PC-3 (cell line): ENCODE measurements at regions of chr5 and their contacts with region 1.

Region 1: DNA sequence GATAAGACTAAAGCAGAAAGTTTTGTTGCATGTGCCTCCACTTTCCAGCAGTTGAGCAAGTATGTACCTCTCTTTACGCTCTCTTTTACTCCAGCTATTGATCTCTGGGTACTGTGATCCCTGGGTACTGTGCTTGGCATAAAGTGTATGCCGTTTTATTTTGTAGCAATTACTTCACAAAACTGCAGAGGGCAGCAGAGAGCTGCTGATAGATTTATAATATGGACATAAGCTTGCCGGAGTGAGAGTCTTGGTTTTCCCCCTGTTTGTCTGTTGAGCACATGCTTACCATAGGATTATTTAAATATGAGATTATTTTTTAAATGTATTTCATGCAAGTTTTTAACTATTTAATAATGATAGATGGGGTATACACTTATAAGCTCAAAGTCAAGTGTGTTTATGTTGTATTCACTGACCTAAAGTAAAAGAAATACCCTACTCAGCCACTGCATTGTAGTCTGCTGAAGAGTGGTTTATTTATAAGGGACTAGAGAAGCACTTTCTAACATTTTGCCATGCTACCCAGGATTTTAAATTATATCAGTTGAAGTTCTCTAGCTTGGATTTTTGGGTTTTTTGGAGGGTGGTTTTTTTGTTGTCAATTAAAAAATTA is 13.0 kb downstream of the TTC1 start:
- DNase-seq: peak; percentile 81
- ATAC-seq: peak; percentile 81
- H3K4me3 ChIP-seq: no peak overlapping the region
- H3K27ac ChIP-seq: no peak overlapping the region
- H3K4me1 ChIP-seq: no peaks in the 10 kb centered on the region
- H3K27me3 ChIP-seq: no peaks in the 10 kb centered on the region
- CTCF ChIP-seq: peak; percentile 85

Region 2: DNA sequence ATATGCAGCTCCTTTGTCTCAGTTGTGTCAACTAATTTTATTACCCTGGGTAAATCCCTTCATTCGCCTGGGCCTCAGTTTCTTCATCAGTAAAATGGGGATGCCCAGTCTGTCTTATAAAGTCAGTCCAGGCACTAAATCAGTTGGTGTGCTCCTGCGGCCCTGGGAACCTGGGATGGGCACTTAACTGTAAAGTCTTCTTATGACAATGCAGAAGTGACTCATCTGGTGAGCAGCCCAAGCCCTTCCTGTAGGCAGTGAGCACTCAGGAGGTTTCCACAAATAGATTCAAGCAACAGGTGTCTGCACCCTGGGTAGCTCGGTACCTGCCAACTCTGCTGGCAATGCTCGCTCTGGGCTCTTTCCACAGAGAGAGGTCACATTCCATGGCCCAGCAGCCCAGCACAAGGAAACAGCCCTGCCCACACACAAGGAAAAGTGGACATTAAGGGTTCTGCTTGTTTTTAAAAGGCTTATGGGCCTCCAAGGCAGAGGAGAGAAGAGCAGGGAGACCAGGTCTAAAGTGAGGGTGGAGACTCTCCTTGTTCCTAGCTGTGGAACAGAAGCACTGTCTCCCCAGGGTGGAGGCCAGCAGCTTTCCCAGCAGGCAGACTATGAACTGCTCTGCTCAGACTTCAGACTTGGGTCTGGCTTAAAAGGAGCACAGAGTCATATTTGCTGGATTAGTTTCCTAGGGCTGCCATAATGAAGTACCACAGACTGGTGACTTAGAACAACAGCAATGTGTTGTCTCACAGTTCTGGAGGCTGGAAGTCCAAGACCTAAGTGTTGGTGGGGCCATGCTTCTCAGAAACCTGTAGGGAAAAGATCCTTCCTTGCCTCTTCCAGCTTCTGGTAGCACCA is 195.4 kb before region 1 on chr5:
- CTCF ChIA-PET with region 1: no interaction called
- POLR2A ChIA-PET with region 1: no interaction called
- intact Hi-C with region 1: no loop called
- DNase-seq: peak; percentile 96
- ATAC-seq: peak; percentile 94
- H3K4me3 ChIP-seq: peak overlapping the region; percentile 9; the same call in 1 of the 2 replicates
- H3K27ac ChIP-seq: peak overlapping the region; percentile 95
- H3K4me1 ChIP-seq: peaks cover 36% of the 10 kb centered on the region
- H3K27me3 ChIP-seq: no peaks in the 10 kb centered on the region
- CTCF ChIP-seq: no peak

Region 3: DNA sequence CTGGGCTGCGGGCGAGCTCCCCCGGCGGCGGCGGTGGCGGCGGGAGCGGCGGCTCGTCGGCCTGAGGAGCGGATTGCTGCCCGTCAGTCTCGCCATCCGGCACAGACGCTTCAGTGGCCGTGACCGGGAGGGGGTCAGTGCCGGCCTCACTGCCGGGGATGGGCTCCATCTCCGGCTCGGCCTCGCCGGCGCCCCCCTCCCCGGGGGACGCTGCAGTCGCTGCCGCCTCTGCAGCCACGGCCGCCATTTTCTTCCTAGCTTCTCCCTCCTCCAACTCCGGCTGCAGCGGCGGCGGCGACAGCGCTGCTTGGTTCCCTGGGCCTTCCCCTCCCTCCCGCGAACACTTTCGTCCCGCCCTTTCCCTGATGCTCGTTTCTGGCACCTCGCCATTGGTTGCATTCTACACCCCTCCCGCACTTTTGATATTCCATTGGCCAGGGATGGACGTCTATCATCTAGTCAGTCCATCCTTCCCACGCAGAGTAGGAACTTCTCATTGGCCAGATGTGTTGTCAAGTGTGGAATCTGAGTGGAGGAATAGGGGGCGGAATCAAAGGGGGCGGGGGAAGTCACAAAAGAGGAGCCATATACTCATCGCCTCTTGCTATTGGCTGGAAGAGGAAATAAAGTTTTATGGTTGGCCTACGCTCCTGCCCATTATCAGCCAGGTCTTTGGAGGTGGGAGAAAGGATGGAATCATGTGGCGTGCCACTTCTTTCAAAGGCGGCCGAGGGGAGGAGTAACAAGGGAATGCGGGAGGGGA is 97.4 kb after region 1 on chr5 and contains the start of gene PWWP2A:
- CTCF ChIA-PET with region 1: interaction called, 4 read pairs
- POLR2A ChIA-PET with region 1: no interaction called
- intact Hi-C with region 1: loop called (anchors 5 kb)
- DNase-seq: peak; percentile 100
- ATAC-seq: peak; percentile 93
- H3K4me3 ChIP-seq: peak within 1 kb of the TSS; percentile 99
- H3K27ac ChIP-seq: peak within 1 kb of the TSS; percentile 44
- H3K4me1 ChIP-seq: peaks cover 6% of the 10 kb centered on the region; the same call in 1 of the 2 replicates
- H3K27me3 ChIP-seq: no peaks in the 10 kb centered on the region
- CTCF ChIP-seq: no peak; the same call in 1 of the 2 replicates
- total RNA-seq, gene PWWP2A: 14.2 and 15.3 TPM in 2 replicates

Region 4: GRCh38 chr5:160188142-160189015 is 166.4 kb after region 1 on chr5:
- CTCF ChIA-PET with region 1: no interaction called
- POLR2A ChIA-PET with region 1: interaction called, 6 read pairs
- intact Hi-C with region 1: loop called (anchors 5 kb)
- DNase-seq: peak; percentile 39
- ATAC-seq: peak; percentile 63
- H3K4me3 ChIP-seq: peak overlapping the region; percentile 44
- H3K27ac ChIP-seq: no peak overlapping the region
- H3K4me1 ChIP-seq: peaks cover 4% of the 10 kb centered on the region; the same call in 1 of the 2 replicates
- H3K27me3 ChIP-seq: no peaks in the 10 kb centered on the region
- CTCF ChIP-seq: no peak

Region 5: GRCh38 chr5:160342403-160342941 is 320.5 kb after region 1 on chr5:
- CTCF ChIA-PET with region 1: interaction called, 4 read pairs
- POLR2A ChIA-PET with region 1: no interaction called
- intact Hi-C with region 1: loop called (anchors 1 kb)
- DNase-seq: peak; percentile 59
- ATAC-seq: peak; percentile 42
- H3K4me3 ChIP-seq: no peak overlapping the region
- H3K27ac ChIP-seq: no peak overlapping the region
- H3K4me1 ChIP-seq: peaks cover 6% of the 10 kb centered on the region; the same call in 1 of the 2 replicates
- H3K27me3 ChIP-seq: no peaks in the 10 kb centered on the region
- CTCF ChIP-seq: no peak